MCF 10A (cell line): ENCODE measurements at regions of chr12 and their contacts with region 1.

Region 1: DNA sequence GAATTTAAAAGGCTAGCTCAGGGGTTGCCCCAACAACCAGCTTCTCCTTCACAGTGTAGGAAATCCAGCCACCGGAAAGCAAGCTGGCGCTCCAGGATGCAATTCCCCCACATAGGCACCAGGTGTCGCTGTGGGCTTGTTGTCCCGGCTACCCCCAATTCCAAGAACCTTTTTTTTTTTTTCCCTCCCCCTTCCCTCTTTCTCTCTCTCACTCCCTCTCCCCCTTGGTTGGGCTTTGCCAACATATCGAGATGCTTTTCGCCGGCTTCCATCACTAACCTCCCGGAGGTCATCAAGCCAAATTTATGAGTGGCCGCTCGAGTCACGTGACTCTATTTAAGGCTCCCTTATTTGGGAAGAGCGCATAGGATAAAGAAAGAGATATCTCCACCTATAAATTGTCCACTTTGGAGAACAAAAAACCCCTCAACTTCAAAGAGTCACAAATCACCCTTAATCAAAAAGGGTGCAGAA is at the start of gene HOXC5:
- DNase-seq: peak; percentile 88
- H3K4me3 Mint-ChIP-seq: peak within 1 kb of the TSS; percentile 71
- H3K27ac Mint-ChIP-seq: no peak within 1 kb of the TSS
- H3K4me1 Mint-ChIP-seq: peaks cover 11% of the 10 kb centered on the region
- H3K27me3 Mint-ChIP-seq: no peaks in the 10 kb centered on the region
- CTCF ChIP-seq: peak; percentile 98
- total RNA-seq, gene HOXC5: 0.74 TPM in 1 of 2 replicates, not detected in the other

Region 2: DNA sequence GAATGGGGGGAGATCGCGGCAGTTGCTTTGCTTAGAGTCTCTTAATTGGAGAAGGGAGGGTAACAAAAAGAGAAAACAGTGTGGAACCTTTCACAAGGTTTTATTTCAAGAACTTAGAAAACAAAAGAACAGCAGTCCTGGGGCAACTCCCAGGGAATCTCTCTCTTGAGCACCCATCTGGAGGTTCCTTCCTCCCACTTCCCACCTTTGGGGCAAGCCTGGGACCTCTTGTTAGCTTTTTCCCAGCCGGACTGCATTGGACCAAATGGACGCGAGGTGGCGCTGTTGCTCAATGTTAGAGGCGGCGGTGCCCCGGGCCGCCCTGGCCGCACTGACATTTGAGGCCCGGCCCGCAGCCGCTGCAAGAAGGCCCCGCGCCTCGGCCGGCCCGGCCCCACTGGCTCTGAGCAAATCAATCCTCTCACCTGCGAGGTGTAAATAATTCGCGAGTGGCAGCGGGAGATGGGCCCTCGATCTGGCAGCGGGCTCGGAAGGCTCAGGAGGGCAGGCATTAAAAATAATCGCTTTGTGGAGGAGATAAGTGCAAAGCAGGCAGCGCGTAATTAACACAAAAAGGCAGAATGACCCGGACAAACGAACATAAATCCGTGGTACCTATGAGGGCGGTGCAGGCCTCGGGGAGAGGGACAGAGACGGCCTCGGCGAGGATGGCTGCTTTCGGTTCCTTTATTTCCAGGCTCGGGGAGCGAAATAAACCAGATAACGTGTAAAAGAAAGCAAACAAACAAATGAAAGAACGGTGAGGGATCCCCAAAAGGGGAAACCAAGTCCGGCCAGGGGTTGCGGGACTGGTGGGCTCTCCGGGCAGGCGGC is 26.6 kb before region 1 on chr12:
- CTCF ChIA-PET with region 1: interaction called, 33 read pairs
- POLR2A ChIA-PET with region 1: interaction called, 7 read pairs
- intact Hi-C with region 1: loop called (anchors 1 kb)
- DNase-seq: peak; percentile 88
- H3K4me3 Mint-ChIP-seq: no peak overlapping the region
- H3K27ac Mint-ChIP-seq: no peak overlapping the region
- H3K4me1 Mint-ChIP-seq: peaks cover 25% of the 10 kb centered on the region
- H3K27me3 Mint-ChIP-seq: no peaks in the 10 kb centered on the region
- CTCF ChIP-seq: peak; percentile 96

Region 3: DNA sequence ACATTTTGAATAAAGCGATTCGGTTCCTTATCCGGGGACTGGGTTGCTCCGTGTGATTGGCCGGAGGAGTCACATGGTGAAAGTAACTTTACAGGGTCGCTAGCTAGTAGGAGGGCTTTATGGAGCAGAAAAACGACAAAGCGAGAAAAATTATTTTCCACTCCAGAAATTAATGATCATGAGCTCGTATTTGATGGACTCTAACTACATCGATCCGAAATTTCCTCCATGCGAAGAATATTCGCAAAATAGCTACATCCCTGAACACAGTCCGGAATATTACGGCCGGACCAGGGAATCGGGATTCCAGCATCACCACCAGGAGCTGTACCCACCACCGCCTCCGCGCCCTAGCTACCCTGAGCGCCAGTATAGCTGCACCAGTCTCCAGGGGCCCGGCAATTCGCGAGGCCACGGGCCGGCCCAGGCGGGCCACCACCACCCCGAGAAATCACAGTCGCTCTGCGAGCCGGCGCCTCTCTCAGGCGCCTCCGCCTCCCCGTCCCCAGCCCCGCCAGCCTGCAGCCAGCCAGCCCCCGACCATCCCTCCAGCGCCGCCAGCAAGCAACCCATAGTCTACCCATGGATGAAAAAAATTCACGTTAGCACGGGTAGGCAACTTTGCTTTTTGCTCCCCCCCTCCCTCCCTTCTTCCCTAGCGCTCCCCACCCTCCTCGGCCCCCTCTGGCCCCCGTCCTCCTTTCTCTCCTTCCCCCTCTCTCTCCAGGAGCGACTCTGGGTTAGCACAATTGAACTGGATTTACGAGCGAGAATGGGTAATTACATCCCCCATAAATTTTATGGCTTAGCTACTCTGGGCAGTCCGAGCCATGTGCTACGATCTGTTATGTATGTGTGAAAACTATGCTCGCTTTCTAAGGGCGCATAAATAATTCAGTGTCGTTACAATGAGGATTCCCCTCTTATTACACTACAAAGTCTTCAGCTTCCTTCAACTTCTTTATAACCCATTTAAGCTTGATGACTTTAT is 21.4 kb after region 1 on chr12 and contains the start of gene HOXC4:
- CTCF ChIA-PET with region 1: interaction called, 12 read pairs
- POLR2A ChIA-PET with region 1: no interaction called
- intact Hi-C with region 1: no loop called
- DNase-seq: no peak
- H3K4me3 Mint-ChIP-seq: no peak within 1 kb of the TSS
- H3K27ac Mint-ChIP-seq: no peak within 1 kb of the TSS
- H3K4me1 Mint-ChIP-seq: peaks cover 11% of the 10 kb centered on the region
- H3K27me3 Mint-ChIP-seq: no peaks in the 10 kb centered on the region
- CTCF ChIP-seq: no peak
- total RNA-seq, gene HOXC4: 1.7 and 1.8 TPM in 2 replicates

Region 4: GRCh38 chr12:54126696-54127537 is 94.3 kb after region 1 on chr12:
- CTCF ChIA-PET with region 1: interaction called, 3 read pairs
- POLR2A ChIA-PET with region 1: interaction called, 3 read pairs
- intact Hi-C with region 1: loop called (anchors 2 kb)
- DNase-seq: peak; percentile 69
- H3K4me3 Mint-ChIP-seq: peak overlapping the region; percentile 86
- H3K27ac Mint-ChIP-seq: peak overlapping the region; percentile 90
- H3K4me1 Mint-ChIP-seq: peaks cover 19% of the 10 kb centered on the region
- H3K27me3 Mint-ChIP-seq: no peaks in the 10 kb centered on the region
- CTCF ChIP-seq: no peak

Region 5: GRCh38 chr12:54201001-54201794 is 168.5 kb after region 1 on chr12:
- CTCF ChIA-PET with region 1: interaction called, 233 read pairs
- POLR2A ChIA-PET with region 1: interaction called, 5 read pairs
- intact Hi-C with region 1: loop called (anchors 1 kb)
- DNase-seq: peak; percentile 75
- H3K4me3 Mint-ChIP-seq: no peak overlapping the region
- H3K27ac Mint-ChIP-seq: no peak overlapping the region
- H3K4me1 Mint-ChIP-seq: peaks cover 17% of the 10 kb centered on the region
- H3K27me3 Mint-ChIP-seq: peaks cover 11% of the 10 kb centered on the region
- CTCF ChIP-seq: peak; percentile 92

Region 6: GRCh38 chr12:54285150-54286041 is 252.7 kb after region 1 on chr12:
- CTCF ChIA-PET with region 1: no interaction called
- POLR2A ChIA-PET with region 1: no interaction called
- intact Hi-C with region 1: no loop called
- DNase-seq: no peak
- H3K4me3 Mint-ChIP-seq: no peak overlapping the region
- H3K27ac Mint-ChIP-seq: no peak overlapping the region
- H3K4me1 Mint-ChIP-seq: peaks cover 38% of the 10 kb centered on the region
- H3K27me3 Mint-ChIP-seq: no peaks in the 10 kb centered on the region
- CTCF ChIP-seq: peak; percentile 5